Aorta (tissue), 5 donors: ENCODE measurements at regions of chr5 and their contacts with region 1.

Region 1: GRCh38 chr5:152641970-152642805 is 237.1 kb upstream of the NMUR2 start:
- DNase-seq: no peak
- ATAC-seq: no peak
- H3K4me3 ChIP-seq: no peak overlapping the region
- H3K27ac ChIP-seq: no peak overlapping the region
- H3K4me1 ChIP-seq: peaks cover 0 to 5% of the 10 kb centered on the region in 2 donors
- H3K27me3 ChIP-seq: no peaks in the 10 kb centered on the region

Region 2: GRCh38 chr5:152568016-152568415 is 74.2 kb before region 1 on chr5:
- intact Hi-C with region 1: loop called in 1 of 2 experiments (anchors 5 kb)
- DNase-seq: no peak
- ATAC-seq: no peak
- H3K4me3 ChIP-seq: no peak overlapping the region
- H3K27ac ChIP-seq: no peak overlapping the region
- H3K4me1 ChIP-seq: peaks cover 0 to 3% of the 10 kb centered on the region in 2 donors
- H3K27me3 ChIP-seq: no peaks in the 10 kb centered on the region

Region 3: GRCh38 chr5:152607401-152608160 is 34.6 kb before region 1 on chr5:
- intact Hi-C with region 1: no loop called
- DNase-seq: no peak
- ATAC-seq: no peak
- H3K4me3 ChIP-seq: no peak overlapping the region
- H3K27ac ChIP-seq: no peak overlapping the region
- H3K4me1 ChIP-seq: no peaks in the 10 kb centered on the region
- H3K27me3 ChIP-seq: no peaks in the 10 kb centered on the region

Region 4: DNA sequence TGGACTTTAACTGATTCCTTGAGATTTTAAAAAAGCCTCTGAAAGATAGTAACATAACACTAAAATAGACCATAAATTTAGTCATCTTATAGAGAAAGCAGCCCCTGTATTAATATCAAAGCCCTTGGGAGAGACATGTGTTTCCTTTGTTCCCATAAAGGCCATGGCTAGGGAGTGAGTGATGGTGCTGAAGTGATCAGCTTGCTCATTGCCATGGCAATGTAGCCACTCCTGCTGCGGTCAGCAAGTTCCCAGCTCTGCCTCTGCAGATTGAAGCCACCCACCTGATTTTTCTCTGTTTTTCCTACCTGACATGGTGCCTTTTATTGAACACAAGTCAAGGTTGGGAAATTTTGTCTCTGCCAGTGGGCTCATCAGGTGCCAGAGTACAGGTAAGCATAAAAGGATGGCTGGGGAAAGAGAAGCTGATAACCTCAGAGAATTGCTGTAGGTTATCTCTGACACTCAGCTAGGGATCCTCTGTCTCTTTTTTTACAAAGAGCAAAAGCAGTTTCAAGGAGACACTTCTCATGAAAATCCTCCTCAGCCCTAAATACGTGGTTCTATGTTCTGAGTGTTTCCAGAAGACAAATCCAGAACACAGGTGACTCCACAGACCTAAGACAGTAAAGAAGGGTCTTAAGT is 59.2 kb after region 1 on chr5:
- intact Hi-C with region 1: no loop called
- DNase-seq: no peak
- ATAC-seq: no peak
- H3K4me3 ChIP-seq: no peak overlapping the region
- H3K27ac ChIP-seq: no peak overlapping the region
- H3K4me1 ChIP-seq: no peaks in the 10 kb centered on the region
- H3K27me3 ChIP-seq: no peaks in the 10 kb centered on the region